ENCODE measurements at regions of chr16 and their contacts with region 1.

Region 1: GRCh38 chr16:72938795-72939164 is 109.1 kb downstream of the ZFHX3 start:
- DNase-seq: peak; percentile 93 to 96
- ATAC-seq: peak; percentile 92
- H3K4me3 ChIP-seq: no peak overlapping the region
- H3K27ac ChIP-seq: peak overlapping the region; percentile 47 to 96
- H3K4me1 ChIP-seq: peaks cover 5 to 10% of the 10 kb centered on the region in 2 donors
- H3K27me3 ChIP-seq: no peaks in the 10 kb centered on the region

Region 2: DNA sequence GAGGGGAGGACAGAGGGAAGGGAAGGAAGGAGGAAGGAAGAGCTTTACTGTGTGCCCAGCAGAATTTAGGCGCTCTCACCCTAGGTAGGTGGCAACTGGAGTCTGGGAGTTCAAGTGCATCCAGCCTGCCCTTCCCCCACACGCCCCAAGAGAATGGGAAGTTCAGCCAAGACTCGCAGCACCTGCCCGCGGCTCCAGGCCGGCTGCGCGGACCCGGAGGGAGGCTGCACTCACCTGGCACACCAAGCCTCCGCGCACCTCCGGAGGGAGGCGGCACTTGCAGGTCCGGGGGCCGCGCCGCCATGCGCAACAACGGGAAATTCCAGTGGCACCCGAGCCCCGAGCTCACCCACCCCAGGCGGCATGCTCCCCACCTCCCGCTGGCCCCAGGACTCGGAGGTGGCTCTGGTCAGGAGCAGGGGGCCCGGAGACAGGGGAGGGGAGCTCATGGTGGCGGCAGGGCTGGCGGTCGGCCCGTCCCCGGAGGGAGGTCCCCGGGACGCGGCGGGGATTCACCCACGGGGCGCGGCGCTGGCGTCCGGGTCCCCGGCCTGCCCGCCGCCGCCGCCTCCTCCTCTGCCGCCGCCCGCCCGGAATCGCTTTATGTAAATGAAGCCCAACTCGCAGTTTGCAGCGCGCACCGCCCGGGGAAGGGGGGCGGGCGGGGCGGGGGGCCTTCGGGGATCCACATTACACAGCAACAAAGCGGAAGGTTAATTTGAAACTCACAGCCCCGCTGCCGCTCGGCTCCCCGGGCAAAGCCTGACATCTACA is 108.9 kb after region 1 on chr16 and contains the start of gene ZFHX3:
- intact Hi-C with region 1: loop called (anchors 5 kb)
- DNase-seq: peak; percentile 85 to 90
- ATAC-seq: peak; percentile 65
- H3K4me3 ChIP-seq: peak within 1 kb of the TSS; percentile 79 to 96
- H3K27ac ChIP-seq: peak within 1 kb of the TSS; percentile 100
- H3K4me1 ChIP-seq: peaks cover 6 to 9% of the 10 kb centered on the region in 2 donors
- H3K27me3 ChIP-seq: no peaks in the 10 kb centered on the region
- total RNA-seq, gene ZFHX3: 67.4 to 96.9 TPM

Region 3: DNA sequence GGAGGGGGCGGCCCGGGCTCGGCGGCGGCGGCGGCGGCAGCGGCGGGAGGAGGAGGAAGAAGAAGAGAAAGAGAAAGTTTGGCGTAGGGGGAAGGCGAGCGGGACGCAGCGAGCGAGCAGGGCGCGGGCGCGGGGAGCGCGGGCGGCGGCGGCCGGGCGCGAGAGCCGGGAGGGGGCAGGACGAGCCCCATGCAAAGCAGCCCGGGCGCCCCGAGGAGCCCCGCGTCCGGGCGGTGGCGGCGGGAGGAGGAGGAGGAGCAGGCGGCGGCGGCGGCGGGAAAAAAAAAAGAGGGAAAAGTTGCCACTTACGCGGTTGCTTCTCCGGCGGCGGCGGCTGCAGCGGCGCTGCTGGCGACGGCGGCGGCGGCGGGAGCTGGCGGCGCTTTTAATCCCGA is 119.4 kb after region 1 on chr16:
- intact Hi-C with region 1: loop called in 1 of 2 experiments (anchors 5 kb)
- DNase-seq: peak; percentile 73 to 84
- ATAC-seq: no peak
- H3K4me3 ChIP-seq: peak overlapping the region; percentile 77 to 100
- H3K27ac ChIP-seq: peak overlapping the region; percentile 92 to 100
- H3K4me1 ChIP-seq: no peaks in the 10 kb centered on the region
- H3K27me3 ChIP-seq: no peaks in the 10 kb centered on the region